ENCODE measurements at regions of chr15 and their contacts with region 1.

Region 1: GRCh38 chr15:75639709-75640482 is at the start of gene IMP3:
- DNase-seq: peak; percentile 98
- ATAC-seq: peak; percentile 89
- H3K4me3 ChIP-seq: peak within 1 kb of the TSS; percentile 96
- H3K27ac ChIP-seq: peak within 1 kb of the TSS; percentile 75
- H3K4me1 ChIP-seq: peaks cover 12% of the 10 kb centered on the region
- H3K27me3 ChIP-seq: no peaks in the 10 kb centered on the region
- CTCF ChIP-seq: no peak
- total RNA-seq, gene IMP3: 92.6 and 95.4 TPM in 2 replicates

Region 2: GRCh38 chr15:75367913-75368688 is 271.8 kb before region 1 on chr15 and contains the start of gene MAN2C1:
- CTCF ChIA-PET with region 1: no interaction called
- POLR2A ChIA-PET with region 1: no interaction called
- intact Hi-C with region 1: loop called (anchors 10 kb)
- DNase-seq: peak; percentile 98
- ATAC-seq: peak; percentile 94
- H3K4me3 ChIP-seq: peak within 1 kb of the TSS; percentile 87
- H3K27ac ChIP-seq: peak within 1 kb of the TSS; percentile 91
- H3K4me1 ChIP-seq: peaks cover 16% of the 10 kb centered on the region
- H3K27me3 ChIP-seq: no peaks in the 10 kb centered on the region
- CTCF ChIP-seq: peak; percentile 79
- total RNA-seq, gene MAN2C1: 120 and 126 TPM in 2 replicates

Region 3: DNA sequence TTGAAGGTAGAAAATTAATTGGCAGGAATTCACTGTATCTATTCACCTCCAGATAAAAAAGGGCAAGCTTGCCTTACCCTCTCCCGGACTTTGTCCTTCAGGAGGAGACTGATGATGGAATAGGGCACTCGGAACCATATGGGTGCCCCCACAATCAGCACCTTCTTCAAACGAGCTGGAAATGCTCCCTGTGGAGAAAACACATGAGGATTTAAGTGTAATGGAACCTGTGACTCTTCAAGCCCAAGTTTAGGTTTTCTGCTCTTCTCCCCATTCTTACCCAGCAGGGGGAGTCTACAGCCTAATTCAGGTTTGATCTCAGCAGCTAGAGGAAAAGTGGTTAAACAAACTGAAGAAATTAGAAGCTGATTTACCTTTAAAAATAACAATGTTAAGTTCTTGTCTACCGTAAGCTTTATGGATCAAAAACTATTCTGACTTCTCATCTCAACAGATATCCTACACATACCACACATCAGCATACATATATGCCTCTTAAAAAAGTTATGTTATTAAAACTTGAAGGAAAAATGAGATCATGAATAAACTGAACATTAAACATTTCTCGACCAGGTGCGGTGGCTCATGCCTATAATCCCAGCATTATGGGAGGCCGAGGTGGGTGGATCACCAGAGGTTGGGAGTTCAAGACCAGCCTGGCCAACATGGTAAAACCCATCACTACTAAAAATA is 130.9 kb before region 1 on chr15:
- CTCF ChIA-PET with region 1: no interaction called
- POLR2A ChIA-PET with region 1: no interaction called
- intact Hi-C with region 1: loop called (anchors 1 kb)
- DNase-seq: peak; percentile 58
- ATAC-seq: peak; percentile 45
- H3K4me3 ChIP-seq: no peak overlapping the region
- H3K27ac ChIP-seq: no peak overlapping the region
- H3K4me1 ChIP-seq: no peaks in the 10 kb centered on the region
- H3K27me3 ChIP-seq: no peaks in the 10 kb centered on the region
- CTCF ChIP-seq: peak; percentile 72

Region 4: DNA sequence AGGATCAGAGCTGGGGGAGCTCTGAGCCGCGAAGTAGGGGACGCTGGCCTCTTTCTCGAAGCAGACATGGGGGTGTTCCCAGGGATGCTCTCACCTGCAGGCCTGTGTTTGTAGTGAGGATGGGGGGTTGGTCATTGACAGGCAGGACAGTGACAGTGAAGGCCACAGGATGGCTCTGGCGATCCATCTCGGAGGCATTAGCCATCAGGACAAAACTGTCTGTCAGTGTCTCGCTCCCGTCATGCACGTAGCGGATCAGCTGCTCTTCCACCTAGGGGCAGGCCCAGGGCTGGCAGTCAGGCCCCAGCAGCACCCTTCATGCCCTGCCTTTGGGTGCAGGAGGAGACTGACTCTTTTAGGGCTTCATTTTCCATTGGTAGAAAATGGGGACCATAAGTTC is 44.7 kb after region 1 on chr15:
- CTCF ChIA-PET with region 1: interaction called, 8 read pairs
- POLR2A ChIA-PET with region 1: no interaction called
- intact Hi-C with region 1: loop called (anchors 2 kb)
- DNase-seq: no peak
- ATAC-seq: no peak
- H3K4me3 ChIP-seq: no peak overlapping the region
- H3K27ac ChIP-seq: no peak overlapping the region
- H3K4me1 ChIP-seq: no peaks in the 10 kb centered on the region
- H3K27me3 ChIP-seq: no peaks in the 10 kb centered on the region
- CTCF ChIP-seq: no peak

Region 5: DNA sequence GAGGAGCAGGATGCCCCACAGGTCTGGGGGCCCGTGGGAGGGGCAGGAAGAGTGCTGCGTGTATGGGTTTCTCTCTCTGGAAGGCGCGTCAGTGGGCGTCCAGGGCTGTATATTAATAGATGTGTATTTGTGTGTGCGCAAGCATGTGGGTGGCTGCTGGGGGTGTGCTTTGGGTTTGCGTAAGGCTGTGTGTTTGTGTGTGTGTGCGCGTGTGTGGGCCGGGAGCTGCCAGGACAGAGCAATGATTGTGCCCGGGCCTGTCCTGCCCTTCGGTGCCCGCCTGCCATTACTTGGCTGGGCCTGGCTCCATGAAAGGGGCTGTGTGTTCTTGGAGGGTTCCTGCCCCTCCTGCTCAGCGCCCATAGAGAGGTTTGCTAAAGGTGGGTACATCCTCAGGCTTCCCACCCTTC is 56.4 kb after region 1 on chr15:
- CTCF ChIA-PET with region 1: no interaction called
- POLR2A ChIA-PET with region 1: no interaction called
- intact Hi-C with region 1: no loop called
- DNase-seq: no peak
- ATAC-seq: no peak
- H3K4me3 ChIP-seq: no peak overlapping the region
- H3K27ac ChIP-seq: no peak overlapping the region
- H3K4me1 ChIP-seq: peaks cover 27% of the 10 kb centered on the region
- H3K27me3 ChIP-seq: no peaks in the 10 kb centered on the region
- CTCF ChIP-seq: no peak